ENCODE measurements at regions of chr9 and their contacts with region 1.

Region 1: DNA sequence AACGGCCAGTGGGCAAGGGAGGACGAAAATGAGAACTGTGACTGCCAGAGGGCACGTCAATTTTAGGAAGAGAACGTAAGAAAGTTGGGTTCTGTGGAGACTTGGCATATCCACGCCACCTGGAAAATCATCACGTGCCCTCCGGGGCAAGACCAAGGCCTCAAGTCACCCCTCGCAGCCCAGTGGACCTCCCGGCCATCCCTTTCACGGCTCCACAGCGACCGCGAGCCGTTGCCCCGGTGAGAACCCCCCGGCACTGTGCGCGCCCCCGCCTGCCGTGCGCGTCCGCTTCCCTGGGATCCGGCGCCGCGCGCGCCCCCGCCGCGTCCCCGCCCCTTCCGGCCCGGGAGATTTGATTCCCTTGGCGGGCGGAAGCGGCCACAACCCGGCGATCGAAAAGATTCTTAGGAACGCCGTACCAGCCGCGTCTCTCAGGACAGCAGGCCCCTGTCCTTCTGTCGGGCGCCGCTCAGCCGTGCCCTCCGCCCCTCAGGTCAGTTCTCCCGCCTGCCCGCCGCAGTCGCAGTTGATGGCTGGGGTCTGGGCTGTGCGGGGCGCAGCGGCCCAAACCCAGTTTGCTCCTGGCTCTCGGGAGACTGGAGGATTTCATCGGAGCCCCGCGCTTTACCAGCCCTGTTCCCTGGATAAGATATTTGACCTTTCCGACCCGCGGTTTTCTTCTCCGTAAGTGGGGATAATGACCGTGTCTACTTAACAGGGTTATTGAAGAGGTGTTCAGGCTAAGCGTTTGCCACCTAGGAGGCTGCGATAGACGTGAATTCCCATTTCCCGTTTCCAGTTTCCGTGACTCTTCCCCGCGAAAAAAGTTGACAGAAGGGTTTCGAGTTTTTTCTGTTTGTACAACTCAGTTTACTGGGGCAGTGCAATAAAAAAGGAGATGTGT is at the start of gene MELK:
- DNase-seq: peak; percentile 41 to 79
- H3K4me3 ChIP-seq: peak within 1 kb of the TSS; percentile 98
- H3K27ac ChIP-seq: peak within 1 kb of the TSS; percentile 50
- H3K4me1 ChIP-seq: peaks cover 23% of the 10 kb centered on the region
- H3K27me3 ChIP-seq: no peaks in the 10 kb centered on the region
- CTCF ChIP-seq: no peak
- total RNA-seq, gene MELK: 25.1 and 48.1 TPM in 2 replicates

Region 2: DNA sequence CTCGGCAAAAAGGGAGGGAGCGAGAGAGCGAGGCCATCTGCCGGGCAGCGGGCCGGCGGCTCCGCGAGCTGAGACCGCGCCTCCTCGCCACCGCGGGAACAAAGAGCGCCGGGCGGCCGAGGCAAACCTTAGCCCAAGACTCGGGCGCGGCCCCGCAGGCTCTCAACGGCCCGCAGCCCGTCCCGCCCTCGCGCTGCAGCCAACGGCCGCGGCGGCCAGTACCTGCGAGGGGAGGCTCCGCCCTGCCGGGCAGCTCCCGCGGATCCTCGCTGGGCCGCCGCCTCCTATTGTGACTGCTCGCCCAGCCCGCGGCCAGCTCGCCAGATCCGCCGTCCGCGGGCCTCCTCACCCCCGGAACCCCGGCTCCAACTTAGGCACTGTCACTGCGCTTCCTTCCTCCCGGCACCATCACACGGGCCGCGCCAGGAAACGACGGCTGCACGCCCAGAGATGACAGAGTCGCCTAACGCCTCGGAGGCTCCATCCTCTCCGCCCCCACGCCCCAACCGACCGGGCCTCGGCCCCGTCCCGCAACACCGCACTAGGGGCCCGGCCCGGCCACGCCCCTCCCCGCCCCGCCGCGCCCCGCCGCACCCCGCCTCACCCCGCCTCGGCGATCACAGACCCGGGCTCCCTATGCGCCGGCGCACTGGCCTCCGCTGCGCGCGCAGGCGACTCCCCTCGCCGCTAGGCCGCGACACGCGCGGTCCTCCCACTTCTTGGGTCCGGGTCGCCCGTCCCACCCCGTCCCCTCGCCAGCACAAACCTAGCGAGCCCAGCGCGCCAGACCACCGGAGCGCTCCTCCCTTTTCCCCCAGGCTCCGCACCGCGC is 172.2 kb before region 1 on chr9:
- CTCF ChIA-PET with region 1: no interaction called
- POLR2A ChIA-PET with region 1: no interaction called
- intact Hi-C with region 1: loop called (anchors 5 kb)
- DNase-seq: peak; percentile 70 to 84
- H3K4me3 ChIP-seq: peak overlapping the region; percentile 73
- H3K27ac ChIP-seq: peak overlapping the region; percentile 84
- H3K4me1 ChIP-seq: peaks cover 29% of the 10 kb centered on the region
- H3K27me3 ChIP-seq: no peaks in the 10 kb centered on the region
- CTCF ChIP-seq: no peak